Activated CD4-positive, alpha-beta memory T cell treated with anti-CD3 and anti-CD28 coated beads, Interleukin-2, amount 10 ng/mL, durations not matched to agents 7 days and 5 days (primary cell): ENCODE measurements at regions of chr1 and their contacts with region 1.

Region 1: DNA sequence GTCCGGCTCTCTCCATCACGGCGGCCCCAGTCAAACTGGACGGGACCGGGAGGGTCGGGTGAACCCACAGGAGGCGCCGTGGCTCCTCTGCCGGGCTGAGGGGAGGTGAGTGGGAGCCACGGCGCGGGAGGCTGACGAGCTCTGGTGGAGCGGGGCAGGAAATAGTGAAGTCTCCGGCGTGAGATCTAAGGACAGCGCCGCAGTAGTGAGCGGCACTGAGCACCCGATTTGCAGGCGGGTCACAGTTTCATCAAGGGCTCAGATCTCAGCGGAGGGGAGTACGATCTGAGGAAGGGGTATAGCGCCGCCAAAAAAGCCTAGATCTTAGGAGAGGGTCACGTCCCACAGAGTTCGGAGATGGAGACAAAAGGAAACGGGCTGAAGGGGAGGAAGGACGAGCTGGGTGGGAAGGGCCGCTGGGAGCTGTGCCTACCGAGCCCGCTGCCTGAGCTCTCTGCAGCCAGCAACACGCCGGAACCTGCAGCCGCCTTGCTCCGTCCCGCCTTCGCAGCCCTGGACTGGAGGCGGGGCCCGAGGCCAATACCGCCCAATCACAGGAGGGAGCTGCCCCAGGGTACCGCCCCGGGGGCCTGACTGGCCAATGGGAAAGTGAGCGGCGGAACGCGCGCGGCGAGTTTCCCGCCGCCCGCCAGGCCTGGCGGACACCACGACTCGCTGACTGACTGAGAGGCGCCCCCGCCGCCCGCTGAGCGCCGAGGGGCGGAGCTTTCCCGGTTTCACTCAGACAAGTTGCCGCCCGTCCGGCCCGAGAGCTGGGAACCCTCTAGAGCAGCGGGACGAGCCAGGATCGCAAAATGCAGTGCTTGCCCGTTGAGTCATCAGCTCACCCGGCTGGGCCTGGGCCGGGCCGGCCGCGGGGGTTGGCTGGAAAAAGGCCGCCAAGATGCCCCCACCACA is 1.9 kb downstream of the SFN start:
- DNase-seq: peak; percentile 97
- H3K4me3 Mint-ChIP-seq: peak overlapping the region; percentile 90
- H3K27ac Mint-ChIP-seq: peak overlapping the region; percentile 93
- H3K4me1 Mint-ChIP-seq: peaks cover 37% of the 10 kb centered on the region
- H3K27me3 Mint-ChIP-seq: no peaks in the 10 kb centered on the region

Region 2: GRCh38 chr1:26811057-26811456 is 53.8 kb before region 1 on chr1:
- CTCF ChIA-PET with region 1: interaction called, 11 read pairs
- POLR2A ChIA-PET with region 1: interaction called, 23 read pairs
- DNase-seq: no peak
- H3K4me3 Mint-ChIP-seq: no peak overlapping the region
- H3K27ac Mint-ChIP-seq: peak overlapping the region; percentile 70
- H3K4me1 Mint-ChIP-seq: peaks cover 33% of the 10 kb centered on the region
- H3K27me3 Mint-ChIP-seq: no peaks in the 10 kb centered on the region

Region 3: GRCh38 chr1:26833432-26834405 is 31.1 kb before region 1 on chr1:
- CTCF ChIA-PET with region 1: interaction called, 22 read pairs
- POLR2A ChIA-PET with region 1: interaction called, 40 read pairs
- DNase-seq: peak; percentile 94
- H3K4me3 Mint-ChIP-seq: peak overlapping the region; percentile 66
- H3K27ac Mint-ChIP-seq: peak overlapping the region; percentile 99
- H3K4me1 Mint-ChIP-seq: peaks cover 80% of the 10 kb centered on the region
- H3K27me3 Mint-ChIP-seq: no peaks in the 10 kb centered on the region

Region 4: DNA sequence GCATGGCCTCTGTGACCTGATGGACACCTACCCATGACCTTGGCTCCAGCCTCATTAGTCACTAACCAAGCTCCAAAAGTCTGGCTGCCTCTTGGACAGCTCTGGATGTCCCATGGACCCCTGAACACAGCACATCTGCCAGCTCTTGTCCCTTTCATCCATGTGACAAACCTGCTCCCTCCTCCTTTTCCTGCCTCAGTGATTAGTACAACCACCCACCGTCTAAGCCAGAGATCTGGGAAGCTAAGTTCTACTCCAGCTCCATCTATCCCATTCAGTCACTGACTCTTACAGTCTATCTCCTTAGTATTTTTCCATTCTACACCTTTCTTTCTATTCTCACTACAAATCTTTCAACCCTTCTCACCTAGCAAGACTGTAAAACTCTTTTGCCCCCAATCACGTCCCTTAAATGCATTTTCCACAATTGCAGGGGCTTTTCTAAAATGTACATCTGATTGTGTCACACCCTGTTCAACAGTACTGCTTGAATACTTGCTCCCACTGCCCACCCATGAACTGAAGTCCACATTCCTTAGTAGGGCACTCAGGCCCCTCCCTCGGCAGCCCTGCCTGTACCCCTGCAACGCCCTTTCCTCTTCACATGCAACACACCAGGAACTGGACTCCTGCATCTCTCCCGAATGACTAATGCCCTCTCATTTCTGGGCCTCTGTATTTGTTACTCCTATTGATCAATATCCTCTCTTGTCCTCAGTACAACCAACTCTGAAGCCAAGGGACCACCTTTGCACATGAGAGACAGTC is 18.0 kb after region 1 on chr1:
- CTCF ChIA-PET with region 1: interaction called, 18 read pairs
- POLR2A ChIA-PET with region 1: interaction called, 70 read pairs
- DNase-seq: no peak
- H3K4me3 Mint-ChIP-seq: no peak overlapping the region
- H3K27ac Mint-ChIP-seq: no peak overlapping the region
- H3K4me1 Mint-ChIP-seq: peaks cover 5% of the 10 kb centered on the region
- H3K27me3 Mint-ChIP-seq: no peaks in the 10 kb centered on the region

Region 5: GRCh38 chr1:26900001-26900814 is 35.3 kb after region 1 on chr1 and contains the start of gene GPATCH3:
- CTCF ChIA-PET with region 1: interaction called, 6 read pairs
- POLR2A ChIA-PET with region 1: interaction called, 39 read pairs
- DNase-seq: peak; percentile 90
- H3K4me3 Mint-ChIP-seq: peak within 1 kb of the TSS; percentile 82
- H3K27ac Mint-ChIP-seq: peak within 1 kb of the TSS; percentile 92
- H3K4me1 Mint-ChIP-seq: peaks cover 39% of the 10 kb centered on the region
- H3K27me3 Mint-ChIP-seq: no peaks in the 10 kb centered on the region
- total RNA-seq, gene GPATCH3: 16.0 to 16.7 TPM